Activated B cell treated with CpG ODN at 0.5 μM for 24 hours (primary cell): ENCODE measurements at regions of chr7 and their contacts with region 1.

Region 1: GRCh38 chr7:155450970-155451801 is 6.7 kb upstream of the EN2 start:
- DNase-seq: no peak
- ATAC-seq: no peak
- H3K4me3 Mint-ChIP-seq: no peak overlapping the region
- H3K27ac Mint-ChIP-seq: no peak overlapping the region
- H3K4me1 Mint-ChIP-seq: peaks cover 24% of the 10 kb centered on the region
- H3K27me3 Mint-ChIP-seq: peaks cover 59% of the 10 kb centered on the region
- CTCF ChIP-seq: no peak

Region 2: DNA sequence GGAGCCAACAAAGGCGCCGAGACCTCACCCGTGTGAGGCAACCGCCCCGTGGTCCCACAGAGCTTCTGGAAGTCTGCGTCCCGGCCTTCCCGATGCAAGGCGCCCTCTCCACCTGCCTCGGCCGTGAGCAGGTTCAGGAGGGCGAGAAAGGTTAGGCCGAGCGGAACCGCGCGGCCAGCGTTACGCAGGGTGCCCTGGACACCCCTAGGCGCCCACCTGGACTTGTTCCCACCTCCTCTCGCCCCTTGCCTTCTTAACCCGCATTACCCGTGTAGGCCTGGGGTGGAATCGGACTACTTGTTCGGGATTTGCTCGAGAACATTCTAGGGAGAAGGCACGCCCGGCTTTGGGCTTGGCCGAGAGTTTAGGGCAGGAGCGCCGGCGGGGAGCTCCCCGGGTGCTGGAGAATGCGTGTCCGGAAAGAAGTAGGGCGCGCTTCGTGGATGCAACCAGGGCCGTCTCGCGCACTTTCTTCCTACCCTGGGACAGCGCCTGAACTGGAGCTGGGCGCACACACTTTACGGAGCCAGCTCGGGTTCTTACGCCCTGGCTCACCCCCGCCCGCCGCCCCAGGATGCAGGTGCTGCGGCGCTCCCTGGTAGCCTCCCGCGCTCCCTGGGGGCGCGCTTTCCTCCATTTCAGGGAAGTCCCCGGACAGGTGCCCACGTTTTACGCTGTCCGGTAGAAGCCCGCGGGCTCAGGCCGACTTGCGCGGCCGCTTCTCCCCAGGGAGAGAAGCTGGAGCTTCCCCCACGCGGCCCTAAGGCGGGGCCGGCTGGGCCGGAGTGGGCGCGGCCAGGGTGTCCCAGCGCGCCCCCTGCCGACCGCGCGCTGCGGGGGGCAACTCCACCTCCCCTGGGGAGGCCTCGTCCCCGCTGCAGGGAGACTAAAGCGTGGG is 79.1 kb before region 1 on chr7:
- CTCF ChIA-PET with region 1: no interaction called
- POLR2A ChIA-PET with region 1: no interaction called
- intact Hi-C with region 1: loop called (anchors 2 kb)
- DNase-seq: peak; percentile 43
- ATAC-seq: peak; percentile 70
- H3K4me3 Mint-ChIP-seq: peak overlapping the region; percentile 86
- H3K27ac Mint-ChIP-seq: no peak overlapping the region
- H3K4me1 Mint-ChIP-seq: peaks cover 38% of the 10 kb centered on the region
- H3K27me3 Mint-ChIP-seq: peaks cover 56% of the 10 kb centered on the region
- CTCF ChIP-seq: no peak

Region 3: DNA sequence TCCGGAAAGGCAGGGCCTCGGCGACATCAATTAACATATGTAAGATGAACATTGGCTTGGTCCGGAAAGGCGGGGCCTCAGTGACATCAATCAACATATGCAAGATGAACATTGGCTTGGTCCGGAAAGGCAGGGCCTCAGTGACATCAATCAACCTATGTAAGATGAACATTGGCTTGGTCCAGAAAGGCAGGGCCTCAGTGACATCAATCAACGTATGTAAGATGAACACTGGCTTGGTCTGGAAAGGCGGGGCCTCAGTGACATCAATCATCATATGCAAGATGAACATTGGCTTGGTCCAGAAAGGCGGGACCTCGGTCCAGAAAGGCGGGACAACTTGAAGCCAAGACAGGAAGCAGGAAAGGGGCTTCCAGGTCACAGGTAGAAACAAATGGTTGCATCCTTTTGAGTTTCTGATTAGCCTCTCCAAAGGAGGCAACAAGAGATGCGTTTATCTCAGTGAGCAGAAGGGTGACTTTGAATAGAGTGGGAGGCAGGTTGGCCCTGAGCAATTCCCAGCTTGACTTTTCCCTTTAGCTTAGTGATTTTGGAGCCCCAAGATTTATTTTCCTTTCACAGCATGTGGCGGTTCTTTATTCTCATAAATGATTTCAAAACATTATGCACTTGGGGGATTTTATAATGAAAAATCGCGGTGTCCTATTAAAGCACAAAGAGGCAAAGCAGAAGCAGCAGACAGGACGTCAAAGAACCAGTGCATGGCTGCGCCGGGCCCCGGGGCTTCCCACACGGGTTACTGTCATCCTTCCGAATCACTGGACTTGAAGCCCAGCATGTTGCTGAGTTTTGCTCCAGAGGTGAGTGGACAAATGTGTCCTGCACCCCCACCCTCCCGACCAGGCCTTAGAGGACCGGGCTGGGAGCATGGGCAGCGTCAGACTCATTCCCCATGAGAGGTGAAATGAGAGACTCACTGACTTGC is 36.4 kb before region 1 on chr7:
- CTCF ChIA-PET with region 1: no interaction called
- POLR2A ChIA-PET with region 1: no interaction called
- intact Hi-C with region 1: no loop called
- DNase-seq: no peak
- ATAC-seq: no peak
- H3K4me3 Mint-ChIP-seq: no peak overlapping the region
- H3K27ac Mint-ChIP-seq: no peak overlapping the region
- H3K4me1 Mint-ChIP-seq: no peaks in the 10 kb centered on the region
- H3K27me3 Mint-ChIP-seq: peaks cover 9% of the 10 kb centered on the region
- CTCF ChIP-seq: no peak

Region 4: DNA sequence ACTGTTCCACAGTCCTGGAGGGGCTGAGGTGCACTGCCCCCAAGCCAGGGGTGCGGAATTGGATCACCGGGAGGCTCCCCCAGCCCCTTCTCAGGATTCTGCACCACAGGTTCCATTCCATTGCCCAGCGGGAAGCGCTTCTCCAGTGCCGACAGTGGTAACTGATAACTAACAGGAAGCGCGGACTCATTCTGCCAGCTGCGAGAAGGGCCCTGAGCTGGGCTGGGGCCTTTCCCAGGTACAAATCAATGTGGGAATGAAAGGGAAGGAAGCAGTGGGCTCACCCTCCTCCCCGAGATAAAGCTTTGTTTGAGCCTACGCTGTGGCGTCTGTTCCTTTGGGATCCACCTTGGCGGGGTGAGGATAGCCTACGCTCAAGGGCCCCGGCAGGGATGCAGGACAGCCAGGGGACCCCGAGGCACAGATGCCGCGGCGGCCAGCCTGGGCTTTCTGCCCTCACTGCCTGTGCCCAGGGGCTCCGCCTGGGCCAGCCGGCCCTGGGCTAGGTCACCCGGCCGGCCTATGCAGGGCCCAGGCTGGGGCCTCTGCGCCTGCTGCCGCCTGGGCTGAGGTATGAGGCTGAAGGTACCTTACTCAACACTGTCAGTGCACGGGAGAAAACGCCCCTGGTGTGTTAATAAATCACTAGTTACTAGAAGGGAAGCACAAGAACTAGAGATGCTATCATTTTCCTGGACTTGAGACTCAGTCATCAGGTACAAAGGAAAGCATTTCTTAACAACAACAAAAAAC is 46.1 kb after region 1 on chr7:
- CTCF ChIA-PET with region 1: no interaction called
- POLR2A ChIA-PET with region 1: no interaction called
- intact Hi-C with region 1: no loop called
- DNase-seq: no peak
- ATAC-seq: no peak
- H3K4me3 Mint-ChIP-seq: no peak overlapping the region
- H3K27ac Mint-ChIP-seq: no peak overlapping the region
- H3K4me1 Mint-ChIP-seq: no peaks in the 10 kb centered on the region
- H3K27me3 Mint-ChIP-seq: peaks cover 37% of the 10 kb centered on the region
- CTCF ChIP-seq: no peak